HAP-1 (cell line): ENCODE measurements at regions of chr5 and their contacts with region 1.

Region 1: DNA sequence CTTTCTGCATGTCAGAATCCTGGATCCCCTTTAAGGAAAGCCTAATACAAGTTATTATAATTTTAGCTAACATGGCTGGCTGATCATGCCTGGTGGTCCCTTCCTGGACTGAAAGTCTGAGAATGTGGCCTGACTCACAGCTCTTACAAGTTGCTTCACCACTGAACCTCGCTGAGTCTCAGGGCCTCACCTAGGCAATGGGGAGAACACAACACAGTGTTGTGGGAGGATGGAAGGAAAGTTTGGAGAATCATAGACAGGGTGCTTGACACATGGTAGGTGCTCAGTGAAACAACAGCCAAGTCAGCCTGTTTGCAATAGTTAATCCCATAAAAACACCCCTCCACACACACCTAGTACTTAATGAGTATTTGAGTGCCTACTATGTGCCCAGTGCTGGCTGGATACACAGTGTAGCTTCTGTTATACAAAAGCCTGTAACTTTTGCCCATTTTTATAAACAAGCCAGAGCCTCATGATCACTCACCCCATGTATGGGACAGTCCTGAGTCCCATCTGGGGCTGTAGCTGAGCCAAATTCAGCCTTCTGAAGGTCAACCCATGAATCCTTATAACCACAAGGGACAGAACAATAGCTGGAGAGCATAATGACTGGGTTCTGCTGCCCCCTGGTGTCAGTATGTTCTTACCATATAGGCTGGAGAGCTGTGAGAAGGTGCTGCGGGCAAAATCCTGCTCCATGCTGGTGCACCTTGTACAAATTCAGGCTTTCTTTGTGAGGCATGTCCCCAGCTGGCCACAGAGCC is 3.9 kb downstream of the ACSL6 start:
- DNase-seq: peak; percentile 78 to 88
- H3K4me3 ChIP-seq: no peak overlapping the region
- H3K4me1 ChIP-seq: no peaks in the 10 kb centered on the region
- H3K27me3 ChIP-seq: no peaks in the 10 kb centered on the region

Region 2: GRCh38 chr5:131423056-131423455 is 584.5 kb before region 1 on chr5:
- in situ Hi-C with region 1: loop called (anchors 5 kb)
- DNase-seq: peak; percentile 16 to 34
- H3K4me3 ChIP-seq: no peak overlapping the region
- H3K4me1 ChIP-seq: no peaks in the 10 kb centered on the region
- H3K27me3 ChIP-seq: no peaks in the 10 kb centered on the region

Region 3: GRCh38 chr5:131589510-131590348 is 417.9 kb before region 1 on chr5:
- in situ Hi-C with region 1: loop called (anchors 5 kb)
- DNase-seq: peak; percentile 34 to 55
- H3K4me3 ChIP-seq: no peak overlapping the region
- H3K4me1 ChIP-seq: peaks cover 11% of the 10 kb centered on the region
- H3K27me3 ChIP-seq: no peaks in the 10 kb centered on the region

Region 4: DNA sequence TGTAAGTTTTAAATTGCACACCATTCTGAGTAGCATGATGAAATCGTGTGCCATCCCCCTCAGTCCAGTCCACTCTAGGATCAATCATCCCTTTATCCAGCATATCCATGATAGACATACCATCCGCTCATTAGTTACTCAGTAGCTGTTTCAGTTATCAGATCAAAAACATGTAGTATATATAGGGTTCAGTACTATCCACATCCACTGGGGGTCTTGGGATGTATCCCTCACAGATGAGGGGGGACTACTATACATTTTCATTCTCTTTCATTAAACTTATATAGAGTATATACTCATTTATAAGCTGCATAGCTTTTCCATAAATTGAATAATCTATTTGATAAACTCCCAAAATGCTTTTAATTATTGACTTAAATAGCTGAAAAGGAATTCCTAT is 129.7 kb before region 1 on chr5:
- in situ Hi-C with region 1: no loop called
- DNase-seq: no peak
- H3K4me3 ChIP-seq: no peak overlapping the region
- H3K4me1 ChIP-seq: no peaks in the 10 kb centered on the region
- H3K27me3 ChIP-seq: no peaks in the 10 kb centered on the region